Right ventricle myocardium inferior (tissue), 1 donor: ENCODE measurements at regions of chr11 and their contacts with region 1.

Region 1: DNA sequence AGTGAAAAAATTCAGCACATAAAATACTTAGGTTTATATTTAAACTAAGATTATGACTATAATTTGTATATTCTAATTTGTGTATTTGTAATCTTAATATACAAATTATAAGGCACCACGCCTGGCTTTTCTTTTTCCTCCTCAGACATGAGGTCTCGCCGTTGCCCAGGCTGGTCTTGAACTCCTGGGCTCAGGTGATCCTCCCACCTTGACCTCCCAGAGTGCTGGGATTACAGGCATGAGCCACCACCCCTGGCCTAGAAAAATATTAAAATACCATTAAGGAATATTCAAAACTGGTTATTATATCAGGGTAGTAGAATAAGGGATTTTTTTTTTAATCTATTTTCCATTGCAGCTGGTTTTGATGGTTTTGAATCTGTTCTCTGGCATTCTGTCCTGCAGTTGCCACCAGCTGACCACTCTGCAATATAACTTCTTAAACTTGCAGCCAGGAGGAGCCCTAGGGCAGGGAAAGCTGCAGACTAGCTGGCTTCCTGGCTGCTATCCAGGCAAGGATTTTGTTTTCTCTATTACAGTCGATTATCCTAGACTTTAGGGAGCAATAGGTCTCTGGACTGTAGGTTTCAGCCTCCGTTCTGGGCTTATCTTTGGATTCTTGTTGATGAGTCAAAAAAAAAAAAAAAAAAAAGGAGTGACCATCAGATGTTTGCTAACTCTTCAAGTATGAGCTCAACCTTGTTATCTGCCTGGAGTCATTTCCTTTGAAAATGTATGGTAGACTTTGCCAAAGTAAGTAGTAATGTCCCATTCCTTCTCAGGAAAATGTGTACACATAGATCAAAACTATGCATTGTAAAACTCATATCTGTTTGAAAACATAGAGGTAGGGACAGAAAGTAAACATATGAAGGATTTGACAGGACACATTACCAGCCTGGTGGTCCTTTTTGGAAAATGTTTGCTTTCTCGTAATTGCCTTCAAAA is 13.2 kb downstream of the POLA2 start:
- DNase-seq: peak; percentile 79
- ATAC-seq: peak; percentile 92

Region 2: DNA sequence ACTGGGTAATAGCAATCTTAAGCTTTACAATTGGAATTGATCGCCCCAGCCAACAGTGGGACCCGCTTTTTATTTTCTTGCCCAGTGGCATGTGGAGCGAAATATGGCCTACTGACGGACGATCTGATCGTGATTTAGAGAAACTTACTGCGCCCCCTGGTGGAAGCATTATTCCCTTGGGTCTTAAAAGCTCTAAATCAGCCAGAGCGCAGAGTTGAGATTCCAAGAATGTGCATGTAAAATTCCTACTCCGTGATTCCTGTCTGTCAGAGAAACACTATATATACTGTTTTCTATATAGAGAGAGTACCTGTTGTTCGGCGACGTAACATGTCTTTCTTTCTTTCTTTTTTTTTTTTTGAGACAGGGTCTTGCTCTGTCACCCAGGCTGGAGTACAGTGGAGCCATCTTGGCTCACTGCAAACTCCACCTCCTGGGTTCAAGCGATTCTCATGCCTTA is 55.0 kb after region 1 on chr11:
- intact Hi-C with region 1: loop called (anchors 1 kb)
- DNase-seq: no peak
- ATAC-seq: peak; percentile 30

Region 3: GRCh38 chr11:65454696-65455456 is 179.9 kb after region 1 on chr11:
- intact Hi-C with region 1: no loop called
- DNase-seq: peak; percentile 96
- ATAC-seq: peak; percentile 97

Region 4: DNA sequence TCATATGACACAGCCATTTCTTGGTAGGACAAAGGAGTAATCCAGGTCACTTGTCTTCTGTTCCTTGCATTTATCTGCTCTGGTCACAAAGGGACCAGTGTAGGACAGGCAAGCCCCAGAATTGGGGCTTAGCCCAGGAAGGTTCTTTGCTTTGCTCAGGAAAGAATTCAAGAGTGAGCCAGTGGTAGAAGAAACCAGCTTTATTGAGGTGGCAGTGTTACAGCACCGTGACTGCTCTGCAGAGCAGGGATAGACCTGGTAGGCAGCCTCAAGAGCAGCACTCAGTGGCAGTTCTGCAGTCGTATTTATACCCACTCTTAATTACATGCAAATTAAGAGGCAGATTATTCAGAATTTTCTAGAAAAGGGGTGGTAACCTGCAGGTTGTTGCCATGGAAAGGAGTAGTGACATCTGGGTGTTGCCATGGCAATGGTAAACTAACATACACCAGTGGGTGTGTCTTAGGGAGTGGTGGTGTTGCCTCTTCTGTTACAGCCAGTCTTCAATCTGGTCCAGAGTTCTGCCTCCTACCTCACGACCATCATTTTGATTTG is 908.6 kb after region 1 on chr11:
- intact Hi-C with region 1: no loop called
- DNase-seq: no peak
- ATAC-seq: no peak